AG04449 (cell line): ENCODE measurements at regions of chr21 and their contacts with region 1.

Region 1: GRCh38 chr21:34888569-34889319 is 160.4 kb downstream of the RUNX1 start:
- DNase-seq: peak; percentile 82
- H3K4me3 ChIP-seq: peak overlapping the region; percentile 83
- CTCF ChIP-seq: no peak

Region 2: GRCh38 chr21:34865928-34866284 is 22.8 kb before region 1 on chr21:
- CTCF ChIA-PET with region 1: no interaction called
- POLR2A ChIA-PET with region 1: no interaction called
- DNase-seq: no peak
- H3K4me3 ChIP-seq: no peak overlapping the region
- CTCF ChIP-seq: no peak

Region 3: GRCh38 chr21:34908419-34909055 is 19.8 kb after region 1 on chr21:
- CTCF ChIA-PET with region 1: interaction called, 14 read pairs
- POLR2A ChIA-PET with region 1: interaction called, 4 read pairs
- DNase-seq: no peak
- H3K4me3 ChIP-seq: no peak overlapping the region
- CTCF ChIP-seq: no peak

Region 4: GRCh38 chr21:35051287-35051818 is 162.6 kb after region 1 on chr21:
- CTCF ChIA-PET with region 1: interaction called, 15 read pairs
- POLR2A ChIA-PET with region 1: interaction called, 12 read pairs
- DNase-seq: no peak
- H3K4me3 ChIP-seq: no peak overlapping the region
- CTCF ChIP-seq: peak; percentile 56

Region 5: GRCh38 chr21:35256467-35256988 is 367.8 kb after region 1 on chr21:
- CTCF ChIA-PET with region 1: interaction called, 4 read pairs
- POLR2A ChIA-PET with region 1: interaction called, 12 read pairs
- DNase-seq: peak; percentile 95
- H3K4me3 ChIP-seq: peak overlapping the region; percentile 27
- CTCF ChIP-seq: no peak

Region 6: DNA sequence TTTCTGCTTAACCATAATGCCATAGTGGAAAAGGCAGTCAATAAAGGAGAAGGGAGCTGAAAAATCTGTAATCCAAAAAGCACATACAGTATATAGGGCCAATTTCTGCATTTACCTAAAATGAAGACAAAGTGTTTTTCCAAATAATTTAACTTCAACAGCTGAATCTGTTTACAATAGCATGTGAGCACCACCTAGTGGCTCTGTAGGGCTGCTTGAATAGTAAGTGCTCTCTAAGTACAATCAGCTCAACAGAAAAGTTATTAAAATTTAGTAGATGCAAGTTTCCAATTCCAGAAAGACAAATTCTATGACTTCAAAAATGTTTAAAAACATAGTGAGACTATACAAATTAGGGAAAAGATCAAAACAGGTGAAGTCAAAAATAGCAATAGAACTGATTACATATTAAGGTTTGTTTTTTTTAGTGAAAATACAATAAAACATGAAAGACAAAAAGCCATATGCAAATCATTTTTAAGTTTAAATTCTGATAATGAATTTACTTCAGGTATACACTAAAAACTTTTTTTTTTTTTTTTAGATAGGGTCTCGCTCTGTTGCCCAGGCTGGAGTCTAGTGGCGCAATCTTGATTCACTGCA is 951.6 kb after region 1 on chr21:
- CTCF ChIA-PET with region 1: interaction called, 16 read pairs
- POLR2A ChIA-PET with region 1: interaction called, 13 read pairs
- DNase-seq: peak; percentile 65
- H3K4me3 ChIP-seq: no peak overlapping the region
- CTCF ChIP-seq: peak; percentile 71